Endothelial cell of umbilical vein (primary cell): ENCODE measurements at regions of chr10 and their contacts with region 1.

Region 1: GRCh38 chr10:110035070-110035921 is 27.5 kb downstream of the ADD3 start:
- DNase-seq: no peak
- H3K4me3 ChIP-seq: no peak overlapping the region
- H3K27ac ChIP-seq: no peak overlapping the region
- H3K4me1 ChIP-seq: peaks cover 21% of the 10 kb centered on the region
- H3K27me3 ChIP-seq: no peaks in the 10 kb centered on the region
- CTCF ChIP-seq: no peak
- POLR2A ChIP-seq: no peak

Region 2: GRCh38 chr10:109978481-109978880 is 56.8 kb before region 1 on chr10:
- CTCF ChIA-PET with region 1: interaction called, 11 read pairs
- POLR2A ChIA-PET with region 1: no interaction called
- dilution Hi-C with region 1: no loop called
- intact Hi-C with region 1: no loop called
- DNase-seq: peak; percentile 66
- H3K4me3 ChIP-seq: no peak overlapping the region
- H3K27ac ChIP-seq: no peak overlapping the region
- H3K4me1 ChIP-seq: no peaks in the 10 kb centered on the region
- H3K27me3 ChIP-seq: no peaks in the 10 kb centered on the region
- CTCF ChIP-seq: peak; percentile 71 to 77
- POLR2A ChIP-seq: no peak

Region 3: DNA sequence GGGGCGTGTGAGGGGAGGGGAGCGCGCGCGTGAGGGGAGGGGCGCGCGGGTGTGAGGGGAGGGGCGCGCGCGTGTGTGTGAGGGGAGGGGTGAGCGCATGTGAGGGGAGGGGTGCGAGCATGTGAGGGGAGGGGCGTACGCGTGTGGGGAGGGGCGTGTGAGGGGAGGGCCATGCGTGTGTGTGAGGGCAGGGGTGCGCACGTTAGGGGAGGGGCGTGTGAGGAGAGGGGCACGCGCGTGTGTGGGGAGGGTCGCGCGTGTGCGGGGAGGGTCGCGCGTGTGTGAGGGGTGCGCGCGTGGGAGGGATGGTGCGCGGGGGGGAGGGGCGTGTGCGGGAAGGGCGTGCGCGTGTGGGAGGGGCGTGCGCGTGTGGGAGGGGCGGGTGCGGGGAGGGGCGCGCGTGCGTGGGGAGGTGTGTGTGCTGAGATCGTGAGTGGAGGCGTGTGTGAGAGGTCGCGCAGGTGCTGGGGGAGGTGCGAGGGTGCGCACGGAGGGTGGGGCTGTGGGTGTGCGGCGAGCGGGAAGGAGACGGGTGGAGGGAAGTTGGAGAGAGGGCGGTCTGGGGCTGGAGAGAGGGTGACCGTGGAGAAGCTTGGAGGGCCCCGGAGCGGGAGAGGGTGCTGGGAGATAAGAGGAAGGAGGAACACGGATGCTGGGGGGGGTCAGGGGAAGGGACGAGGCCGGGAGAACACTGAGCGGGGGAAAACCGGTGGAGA is 191.8 kb after region 1 on chr10:
- CTCF ChIA-PET with region 1: no interaction called
- POLR2A ChIA-PET with region 1: no interaction called
- dilution Hi-C with region 1: no loop called
- intact Hi-C with region 1: no loop called
- DNase-seq: no peak
- H3K4me3 ChIP-seq: peak overlapping the region; percentile 39 to 92 (median 40)
- H3K27ac ChIP-seq: no peak overlapping the region
- H3K4me1 ChIP-seq: peaks cover 5% of the 10 kb centered on the region
- H3K27me3 ChIP-seq: no peaks in the 10 kb centered on the region
- CTCF ChIP-seq: no peak
- POLR2A ChIP-seq: no peak